Activated CD8-positive, alpha-beta T cell treated with anti-CD3 and anti-CD28 coated beads, Interleukin-2, amount 10 ng/mL, durations not matched to agents 7 days and 5 days (primary cell): ENCODE measurements at regions of chr2 and their contacts with region 1.

Region 1: DNA sequence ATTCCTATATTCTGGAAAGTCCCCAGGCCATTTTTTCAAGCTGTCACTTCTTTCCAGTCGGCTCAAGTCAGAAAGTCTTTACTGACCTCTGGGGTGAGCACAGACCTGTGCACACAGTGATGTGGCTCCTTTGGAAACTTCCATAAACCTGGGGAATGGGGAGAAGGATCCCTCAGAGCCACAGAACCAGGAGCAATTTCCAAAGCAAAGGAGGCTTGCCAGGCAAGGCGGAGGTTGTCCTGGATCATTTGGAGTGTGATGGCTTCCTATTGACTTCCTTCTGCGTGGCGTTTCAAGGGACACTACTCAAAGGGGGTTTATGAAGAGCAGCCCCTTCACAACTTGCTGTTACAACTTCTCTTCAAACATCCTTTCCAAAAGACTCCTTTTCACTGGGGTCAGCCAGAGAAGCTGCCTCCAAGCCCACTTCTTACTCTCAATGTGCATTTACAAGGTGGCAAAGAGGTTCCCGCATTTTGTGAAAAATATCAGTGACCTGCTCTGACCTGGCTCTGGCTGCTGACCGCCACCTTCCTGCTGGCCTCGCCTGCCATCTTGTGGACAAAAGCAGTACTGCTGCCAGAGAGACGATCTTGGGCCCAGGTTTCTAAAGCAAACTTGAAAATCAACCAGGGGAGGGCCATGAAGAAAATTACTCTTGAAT is 18.2 kb upstream of the TMEM247 start:
- DNase-seq: peak; percentile 79
- ATAC-seq: peak; percentile 73
- H3K4me3 Mint-ChIP-seq: no peak overlapping the region
- H3K27ac Mint-ChIP-seq: no peak overlapping the region
- H3K4me1 Mint-ChIP-seq: peaks cover 12% of the 10 kb centered on the region
- H3K27me3 Mint-ChIP-seq: no peaks in the 10 kb centered on the region

Region 2: GRCh38 chr2:46010925-46011490 is 450.1 kb before region 1 on chr2:
- CTCF ChIA-PET with region 1: interaction called, 13 read pairs
- POLR2A ChIA-PET with region 1: no interaction called
- DNase-seq: no peak
- ATAC-seq: peak; percentile 68
- H3K4me3 Mint-ChIP-seq: no peak overlapping the region
- H3K27ac Mint-ChIP-seq: no peak overlapping the region
- H3K4me1 Mint-ChIP-seq: peaks cover 14% of the 10 kb centered on the region
- H3K27me3 Mint-ChIP-seq: no peaks in the 10 kb centered on the region

Region 3: DNA sequence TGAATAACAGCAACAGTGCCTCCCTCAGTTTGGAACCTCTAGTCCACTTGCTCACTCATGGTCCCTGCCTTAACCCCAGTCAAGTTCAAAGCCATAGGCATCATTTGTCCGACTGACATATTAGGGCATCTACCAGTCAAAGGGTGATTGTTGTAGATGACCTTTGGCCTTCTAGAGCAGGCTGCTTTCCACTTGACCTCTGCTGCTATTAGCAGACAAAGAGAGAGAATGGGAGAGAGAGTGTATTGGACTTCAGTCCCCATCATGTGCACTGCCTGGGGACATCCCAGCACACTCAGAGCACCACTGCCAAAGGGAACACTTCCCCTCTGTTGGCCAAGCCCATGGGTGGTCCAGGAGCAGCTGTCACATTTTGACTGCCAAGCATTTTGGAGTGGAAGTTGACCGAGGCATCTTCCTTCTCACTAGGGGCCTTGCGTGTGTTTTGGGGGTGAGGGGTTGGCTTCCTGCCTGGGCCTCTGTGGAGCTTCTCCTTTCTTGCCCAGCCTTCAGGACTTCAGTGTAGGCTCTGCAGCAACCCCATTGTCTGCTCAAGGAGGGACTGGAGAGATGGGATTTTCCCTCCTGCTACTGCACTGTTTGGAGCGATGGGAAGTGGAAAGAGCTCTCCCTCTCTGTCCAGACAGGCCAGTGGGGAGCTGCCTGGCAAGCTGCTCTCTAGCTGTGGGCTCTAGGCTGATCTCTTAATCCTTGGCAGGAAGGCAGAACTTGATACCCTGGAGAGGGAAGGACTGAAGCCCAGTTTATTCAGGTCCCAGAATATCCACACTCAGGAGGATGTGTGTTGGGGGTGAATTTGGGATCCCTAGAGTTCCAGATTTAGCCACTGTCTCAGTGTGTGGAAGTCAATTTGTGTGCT is 86.3 kb after region 1 on chr2:
- CTCF ChIA-PET with region 1: no interaction called
- POLR2A ChIA-PET with region 1: no interaction called
- DNase-seq: no peak
- ATAC-seq: no peak
- H3K4me3 Mint-ChIP-seq: no peak overlapping the region
- H3K27ac Mint-ChIP-seq: peak overlapping the region; percentile 5
- H3K4me1 Mint-ChIP-seq: peaks cover 57% of the 10 kb centered on the region
- H3K27me3 Mint-ChIP-seq: no peaks in the 10 kb centered on the region